ENCODE measurements at regions of chr13 and their contacts with region 1.

Region 1: GRCh38 chr13:100544866-100545683 is 43.5 kb downstream of the GGACT start:
- DNase-seq: no peak
- H3K4me3 ChIP-seq: no peak overlapping the region
- H3K27ac ChIP-seq: no peak overlapping the region
- H3K4me1 ChIP-seq: no peaks in the 10 kb centered on the region
- H3K27me3 ChIP-seq: no peaks in the 10 kb centered on the region
- CTCF ChIP-seq: no peak

Region 2: GRCh38 chr13:100523981-100524386 is 21.1 kb before region 1 on chr13:
- CTCF ChIA-PET with region 1: interaction called, 11 read pairs
- POLR2A ChIA-PET with region 1: no interaction called
- intact Hi-C with region 1: no loop called
- DNase-seq: no peak
- H3K4me3 ChIP-seq: no peak overlapping the region
- H3K27ac ChIP-seq: no peak overlapping the region
- H3K4me1 ChIP-seq: no peaks in the 10 kb centered on the region
- H3K27me3 ChIP-seq: no peaks in the 10 kb centered on the region
- CTCF ChIP-seq: no peak

Measured in PC-9 (cell line).